Activated B cell treated with CpG ODN at 0.5 μM for 24 hours (primary cell): ENCODE measurements at regions of chr3 and their contacts with region 1.

Region 1: GRCh38 chr3:111616417-111617105 is 21.4 kb upstream of the ZBED2 start:
- DNase-seq: no peak
- ATAC-seq: peak; percentile 89
- H3K4me3 Mint-ChIP-seq: no peak overlapping the region
- H3K27ac Mint-ChIP-seq: peak overlapping the region; percentile 89
- H3K4me1 Mint-ChIP-seq: peaks cover 21% of the 10 kb centered on the region
- H3K27me3 Mint-ChIP-seq: no peaks in the 10 kb centered on the region
- CTCF ChIP-seq: no peak

Region 2: GRCh38 chr3:109731620-109732473 is 1884.7 kb before region 1 on chr3:
- CTCF ChIA-PET with region 1: no interaction called
- POLR2A ChIA-PET with region 1: no interaction called
- intact Hi-C with region 1: loop called (anchors 5 kb)
- DNase-seq: no peak
- ATAC-seq: peak; percentile 62
- H3K4me3 Mint-ChIP-seq: no peak overlapping the region
- H3K27ac Mint-ChIP-seq: no peak overlapping the region
- H3K4me1 Mint-ChIP-seq: no peaks in the 10 kb centered on the region
- H3K27me3 Mint-ChIP-seq: no peaks in the 10 kb centered on the region
- CTCF ChIP-seq: no peak

Region 3: GRCh38 chr3:111071257-111072015 is 545.1 kb before region 1 on chr3 and contains the start of gene NECTIN3:
- CTCF ChIA-PET with region 1: no interaction called
- POLR2A ChIA-PET with region 1: no interaction called
- intact Hi-C with region 1: loop called (anchors 10 kb)
- DNase-seq: peak; percentile 53
- ATAC-seq: peak; percentile 92
- H3K4me3 Mint-ChIP-seq: peak within 1 kb of the TSS; percentile 90
- H3K27ac Mint-ChIP-seq: no peak within 1 kb of the TSS
- H3K4me1 Mint-ChIP-seq: peaks cover 29% of the 10 kb centered on the region
- H3K27me3 Mint-ChIP-seq: peaks cover 46% of the 10 kb centered on the region
- CTCF ChIP-seq: no peak
- total RNA-seq, gene NECTIN3: 0.71 and 0.78 TPM in 2 replicates

Region 4: DNA sequence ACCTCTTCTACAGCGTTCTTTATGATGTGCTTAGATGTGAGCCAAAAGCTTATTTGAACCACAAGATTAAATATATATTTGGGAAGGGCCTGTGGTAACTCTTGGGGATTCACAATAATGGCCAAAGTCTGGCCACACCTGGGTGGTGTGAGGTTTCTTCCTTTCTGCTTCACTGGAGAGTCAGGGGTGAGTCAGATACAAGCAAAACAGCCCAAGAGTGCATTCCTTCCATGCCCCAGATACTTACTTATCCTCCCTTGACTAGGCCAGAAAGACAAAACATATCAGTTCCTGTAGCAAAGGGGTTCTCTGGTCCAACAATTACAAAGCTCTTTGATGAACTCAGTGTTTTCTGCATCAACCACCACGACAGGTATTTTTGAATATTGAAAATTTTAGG is 22.4 kb before region 1 on chr3:
- CTCF ChIA-PET with region 1: interaction called, 12 read pairs
- POLR2A ChIA-PET with region 1: interaction called, 17 read pairs
- intact Hi-C with region 1: loop called (anchors 1 kb)
- DNase-seq: no peak
- ATAC-seq: peak; percentile 81
- H3K4me3 Mint-ChIP-seq: peak overlapping the region; percentile 71
- H3K27ac Mint-ChIP-seq: peak overlapping the region; percentile 90
- H3K4me1 Mint-ChIP-seq: peaks cover 65% of the 10 kb centered on the region
- H3K27me3 Mint-ChIP-seq: no peaks in the 10 kb centered on the region
- CTCF ChIP-seq: no peak